ENCODE measurements at regions of chr3 and their contacts with region 1.

Region 1: DNA sequence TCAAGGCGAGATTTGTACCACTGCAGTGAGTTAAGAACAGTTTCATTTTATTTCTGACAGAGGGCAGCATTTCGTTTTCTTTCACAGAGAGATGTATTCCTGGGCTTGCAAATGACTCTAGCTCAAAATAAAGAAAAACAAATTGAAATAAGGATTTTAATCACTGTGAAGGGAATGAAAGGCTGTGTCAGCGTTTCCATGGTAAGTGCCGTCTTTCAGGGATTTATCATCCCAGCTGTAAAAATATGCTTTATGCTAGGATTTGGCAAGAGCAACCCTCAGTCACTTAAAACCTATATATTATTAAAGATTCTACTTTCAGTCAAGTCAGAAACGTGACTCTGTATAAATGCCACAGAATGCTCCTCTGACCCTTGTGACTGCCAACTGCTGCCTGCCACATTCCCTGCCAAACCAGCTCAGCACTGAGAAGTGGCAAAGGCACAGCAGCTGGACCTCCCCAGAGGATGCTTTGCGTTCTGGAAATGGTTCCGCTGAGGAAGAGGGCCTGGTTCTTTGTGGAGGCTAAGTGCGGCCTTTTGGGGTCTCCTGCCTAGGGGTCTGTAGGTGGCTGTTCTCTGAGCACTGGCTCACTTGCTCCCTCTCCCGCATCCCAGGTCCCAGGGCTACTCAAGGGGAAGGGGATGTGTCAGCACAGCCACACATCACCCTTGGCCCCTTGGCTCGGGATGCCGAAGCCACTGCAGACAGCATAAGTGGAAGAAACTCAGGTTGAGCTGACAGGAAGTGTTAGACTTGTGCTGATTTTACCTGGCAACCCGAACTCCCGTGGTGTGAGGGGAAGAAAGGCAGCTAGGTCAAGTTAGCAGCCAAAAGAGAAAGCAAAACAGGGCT is 56.6 kb upstream of the POMGNT2 start:
- DNase-seq: no peak
- ATAC-seq: peak; percentile 61 to 89 (median 85)
- H3K4me3 ChIP-seq: no peak overlapping the region
- H3K27ac ChIP-seq: peak overlapping the region in 3 of 4 donors; percentile 0 to 54 (median 24)
- H3K4me1 ChIP-seq: peaks cover 0 to 4% (median 0%) of the 10 kb centered on the region in 3 donors
- H3K27me3 ChIP-seq: no peaks in the 10 kb centered on the region
- CTCF ChIP-seq: peak in 2 of 4 donors; percentile 10 to 29

Region 2: DNA sequence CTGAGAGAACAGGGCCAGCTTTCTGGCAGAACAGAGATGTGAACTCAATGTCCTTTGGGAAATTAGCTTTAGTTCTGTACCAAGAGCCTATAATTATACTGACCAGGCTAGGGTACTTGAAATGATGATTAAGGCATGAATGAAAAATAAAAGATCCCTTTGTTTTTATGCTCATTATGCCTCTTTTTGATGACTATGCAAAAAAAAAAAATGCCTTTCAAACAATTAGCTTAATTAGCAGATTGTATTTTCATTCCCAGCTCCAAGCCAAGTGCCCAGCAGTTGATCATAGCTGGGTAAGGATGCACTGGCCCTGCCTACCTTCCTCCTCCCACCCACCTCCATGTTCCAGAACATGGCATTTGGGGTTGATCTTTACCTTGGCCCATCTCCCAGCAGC is 808.8 kb before region 1 on chr3:
- intact Hi-C with region 1: no loop called
- DNase-seq: no peak
- ATAC-seq: no peak
- H3K4me3 ChIP-seq: no peak overlapping the region
- H3K27ac ChIP-seq: no peak overlapping the region
- H3K4me1 ChIP-seq: no peaks in the 10 kb centered on the region
- H3K27me3 ChIP-seq: no peaks in the 10 kb centered on the region
- CTCF ChIP-seq: no peak

Region 3: GRCh38 chr3:43503067-43503728 is 340.7 kb after region 1 on chr3:
- intact Hi-C with region 1: loop called in 2 of 3 experiments (anchors 5 to 10 kb)
- DNase-seq: no peak
- ATAC-seq: peak; percentile 50 to 80 (median 68)
- H3K4me3 ChIP-seq: no peak overlapping the region
- H3K27ac ChIP-seq: no peak overlapping the region
- H3K4me1 ChIP-seq: no peaks in the 10 kb centered on the region
- H3K27me3 ChIP-seq: no peaks in the 10 kb centered on the region
- CTCF ChIP-seq: peak; percentile 20 to 48 (median 25)